ENCODE measurements at regions of chr6 and their contacts with region 1.

Region 1: DNA sequence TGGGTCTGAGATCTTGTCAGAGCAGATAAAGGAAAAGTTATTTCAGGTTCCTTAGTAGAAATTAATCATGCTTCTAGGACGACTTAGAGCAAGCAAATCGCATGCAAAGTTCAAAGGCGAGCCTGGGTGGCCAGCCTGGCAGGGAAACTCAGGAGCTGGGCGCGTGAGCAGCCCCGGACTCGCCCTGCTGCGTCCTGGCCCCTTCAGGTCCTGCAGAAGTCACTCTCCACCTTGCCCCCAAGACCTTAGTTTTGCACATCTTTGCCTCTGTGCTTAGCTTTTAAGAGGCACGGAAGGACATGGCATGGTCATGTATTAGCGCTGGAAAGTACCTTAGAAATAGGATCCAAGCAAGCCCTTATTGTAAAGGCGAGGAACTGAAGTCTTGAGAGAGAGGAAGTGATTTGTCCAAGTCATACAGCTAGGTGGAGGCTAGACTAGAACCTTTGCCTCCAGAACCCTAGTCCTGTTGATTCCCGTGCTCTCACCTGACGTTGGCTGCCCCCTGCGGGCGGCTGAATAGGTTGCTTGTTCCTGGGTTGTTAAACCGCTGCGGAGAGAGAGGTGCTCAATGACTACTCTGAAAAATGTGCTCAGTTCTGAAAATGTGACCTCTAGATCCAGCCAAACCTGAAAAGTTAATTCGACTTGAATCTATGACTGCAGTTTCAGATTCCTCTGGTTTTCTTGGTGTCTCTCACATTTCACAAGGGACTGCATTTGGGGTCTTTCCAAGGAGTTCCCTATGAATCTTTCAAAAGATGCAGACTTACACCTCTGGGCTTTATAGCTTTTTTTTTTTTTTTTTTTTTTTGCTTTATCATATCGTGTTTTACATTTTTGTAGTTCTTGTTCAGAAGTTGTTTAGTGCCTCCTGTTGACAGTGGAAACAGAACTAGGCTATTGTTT is 2.7 kb downstream of the MYB start:
- DNase-seq: peak; percentile 78
- ATAC-seq: peak; percentile 37
- H3K4me3 ChIP-seq: peak overlapping the region; percentile 47 to 74 (median 67)
- H3K4me3 Mint-ChIP-seq: peak overlapping the region; percentile 86
- H3K27ac ChIP-seq: no peak overlapping the region
- H3K27ac Mint-ChIP-seq: peak overlapping the region; percentile 44
- H3K4me1 ChIP-seq: peaks cover 14 to 28% of the 10 kb centered on the region in 2 donors
- H3K4me1 Mint-ChIP-seq: peaks cover 20% of the 10 kb centered on the region
- H3K27me3 ChIP-seq: peaks cover 0 to 17% (median 1%) of the 10 kb centered on the region in 4 experiments
- H3K27me3 Mint-ChIP-seq: peaks cover 6% of the 10 kb centered on the region
- CTCF ChIP-seq: peak; percentile 62

Region 2: GRCh38 chr6:134174672-134175198 is 1009.1 kb before region 1 on chr6:
- CTCF ChIA-PET with region 1: no interaction called
- POLR2A ChIA-PET with region 1: no interaction called
- intact Hi-C with region 1: loop called (anchors 5 kb)
- DNase-seq: peak; percentile 95
- ATAC-seq: peak; percentile 89
- H3K4me3 ChIP-seq: peak overlapping the region; percentile 75 to 97 (median 77)
- H3K4me3 Mint-ChIP-seq: peak overlapping the region; percentile 95
- H3K27ac ChIP-seq: peak overlapping the region; percentile 69 to 70
- H3K27ac Mint-ChIP-seq: peak overlapping the region; percentile 92
- H3K4me1 ChIP-seq: peaks cover 29 to 33% of the 10 kb centered on the region in 2 donors
- H3K4me1 Mint-ChIP-seq: peaks cover 46% of the 10 kb centered on the region
- H3K27me3 ChIP-seq: no peaks in the 10 kb centered on the region
- H3K27me3 Mint-ChIP-seq: peaks cover 12% of the 10 kb centered on the region
- CTCF ChIP-seq: no peak

Region 3: GRCh38 chr6:134921721-134922261 is 262.0 kb before region 1 on chr6:
- CTCF ChIA-PET with region 1: no interaction called
- POLR2A ChIA-PET with region 1: no interaction called
- intact Hi-C with region 1: no loop called
- DNase-seq: no peak
- ATAC-seq: no peak
- H3K4me3 ChIP-seq: no peak overlapping the region
- H3K4me3 Mint-ChIP-seq: no peak overlapping the region
- H3K27ac ChIP-seq: no peak overlapping the region
- H3K27ac Mint-ChIP-seq: no peak overlapping the region
- H3K4me1 ChIP-seq: no peaks in the 10 kb centered on the region
- H3K4me1 Mint-ChIP-seq: no peaks in the 10 kb centered on the region
- H3K27me3 ChIP-seq: peaks cover 0 to 3% (median 0%) of the 10 kb centered on the region in 4 experiments
- H3K27me3 Mint-ChIP-seq: peaks cover 3% of the 10 kb centered on the region
- CTCF ChIP-seq: no peak

Region 4: GRCh38 chr6:135054569-135055498 is 129.0 kb before region 1 on chr6 and contains the start of gene HBS1L:
- CTCF ChIA-PET with region 1: interaction called, 10 read pairs
- POLR2A ChIA-PET with region 1: interaction called, 4 read pairs
- intact Hi-C with region 1: loop called (anchors 2 kb)
- DNase-seq: peak; percentile 99
- ATAC-seq: peak; percentile 98
- H3K4me3 ChIP-seq: peak within 1 kb of the TSS; percentile 68 to 98 (median 91)
- H3K4me3 Mint-ChIP-seq: peak within 1 kb of the TSS; percentile 95
- H3K27ac ChIP-seq: peak within 1 kb of the TSS; percentile 80 to 95
- H3K27ac Mint-ChIP-seq: peak within 1 kb of the TSS; percentile 95
- H3K4me1 ChIP-seq: peaks cover 16 to 19% of the 10 kb centered on the region in 2 donors
- H3K4me1 Mint-ChIP-seq: peaks cover 34% of the 10 kb centered on the region
- H3K27me3 ChIP-seq: no peaks in the 10 kb centered on the region
- H3K27me3 Mint-ChIP-seq: no peaks in the 10 kb centered on the region
- CTCF ChIP-seq: no peak
- total RNA-seq, gene HBS1L: 58.2 and 58.9 TPM in 2 replicates

Region 5: GRCh38 chr6:135162678-135163439 is 20.9 kb before region 1 on chr6:
- CTCF ChIA-PET with region 1: interaction called, 9 read pairs
- POLR2A ChIA-PET with region 1: interaction called, 3 read pairs
- intact Hi-C with region 1: loop called (anchors 2 kb)
- DNase-seq: peak; percentile 55
- ATAC-seq: peak; percentile 50
- H3K4me3 ChIP-seq: no peak overlapping the region
- H3K4me3 Mint-ChIP-seq: peak overlapping the region; percentile 39
- H3K27ac ChIP-seq: peak overlapping the region in 1 of 2 donors; percentile 34
- H3K27ac Mint-ChIP-seq: peak overlapping the region; percentile 82
- H3K4me1 ChIP-seq: peaks cover 8% of the 10 kb centered on the region in 2 donors
- H3K4me1 Mint-ChIP-seq: peaks cover 13% of the 10 kb centered on the region
- H3K27me3 ChIP-seq: peaks cover 0 to 2% (median 0%) of the 10 kb centered on the region in 4 experiments
- H3K27me3 Mint-ChIP-seq: no peaks in the 10 kb centered on the region
- CTCF ChIP-seq: peak; percentile 81

Region 6: GRCh38 chr6:135497412-135498269 is 313.9 kb after region 1 on chr6 and contains the start of gene AHI1:
- CTCF ChIA-PET with region 1: no interaction called
- POLR2A ChIA-PET with region 1: no interaction called
- intact Hi-C with region 1: loop called (anchors 5 kb)
- DNase-seq: peak; percentile 96
- ATAC-seq: peak; percentile 90
- H3K4me3 ChIP-seq: peak within 1 kb of the TSS; percentile 82 to 97 (median 93)
- H3K4me3 Mint-ChIP-seq: peak within 1 kb of the TSS; percentile 20
- H3K27ac ChIP-seq: peak within 1 kb of the TSS; percentile 93 to 99
- H3K27ac Mint-ChIP-seq: no peak within 1 kb of the TSS
- H3K4me1 ChIP-seq: peaks cover 10 to 12% of the 10 kb centered on the region in 2 donors
- H3K4me1 Mint-ChIP-seq: peaks cover 12% of the 10 kb centered on the region
- H3K27me3 ChIP-seq: no peaks in the 10 kb centered on the region
- H3K27me3 Mint-ChIP-seq: no peaks in the 10 kb centered on the region
- CTCF ChIP-seq: no peak
- total RNA-seq, gene AHI1: 57.9 and 61.7 TPM in 2 replicates

Region 7: GRCh38 chr6:136289579-136290409 is 1106.0 kb after region 1 on chr6 and contains the start of gene BCLAF1:
- CTCF ChIA-PET with region 1: no interaction called
- POLR2A ChIA-PET with region 1: no interaction called
- intact Hi-C with region 1: loop called (anchors 10 kb)
- DNase-seq: peak; percentile 100
- ATAC-seq: peak; percentile 78
- H3K4me3 ChIP-seq: peak within 1 kb of the TSS; percentile 93 to 100 (median 99)
- H3K4me3 Mint-ChIP-seq: peak within 1 kb of the TSS; percentile 98
- H3K27ac ChIP-seq: peak within 1 kb of the TSS; percentile 99 to 100
- H3K27ac Mint-ChIP-seq: peak within 1 kb of the TSS; percentile 100
- H3K4me1 ChIP-seq: peaks cover 38 to 49% of the 10 kb centered on the region in 2 donors
- H3K4me1 Mint-ChIP-seq: peaks cover 44% of the 10 kb centered on the region
- H3K27me3 ChIP-seq: no peaks in the 10 kb centered on the region
- H3K27me3 Mint-ChIP-seq: no peaks in the 10 kb centered on the region
- CTCF ChIP-seq: no peak
- total RNA-seq, gene BCLAF1: 256 and 268 TPM in 2 replicates

Measured in B cell (primary cell).